ENCODE measurements at regions of chr4 and their contacts with region 1.

Region 1: GRCh38 chr4:184250795-184251669 is 33.4 kb upstream of the ENPP6 start:
- DNase-seq: peak; percentile 47
- H3K4me3 Mint-ChIP-seq: no peak overlapping the region
- H3K27ac Mint-ChIP-seq: no peak overlapping the region
- H3K4me1 Mint-ChIP-seq: peaks cover 20% of the 10 kb centered on the region
- H3K27me3 Mint-ChIP-seq: no peaks in the 10 kb centered on the region

Region 2: GRCh38 chr4:183840311-183840710 is 410.7 kb before region 1 on chr4:
- CTCF ChIA-PET with region 1: interaction called, 3 read pairs
- intact Hi-C with region 1: loop called (anchors 1 kb)
- DNase-seq: peak; percentile 81
- H3K4me3 Mint-ChIP-seq: no peak overlapping the region
- H3K27ac Mint-ChIP-seq: no peak overlapping the region
- H3K4me1 Mint-ChIP-seq: no peaks in the 10 kb centered on the region
- H3K27me3 Mint-ChIP-seq: peaks cover 12% of the 10 kb centered on the region

Region 3: DNA sequence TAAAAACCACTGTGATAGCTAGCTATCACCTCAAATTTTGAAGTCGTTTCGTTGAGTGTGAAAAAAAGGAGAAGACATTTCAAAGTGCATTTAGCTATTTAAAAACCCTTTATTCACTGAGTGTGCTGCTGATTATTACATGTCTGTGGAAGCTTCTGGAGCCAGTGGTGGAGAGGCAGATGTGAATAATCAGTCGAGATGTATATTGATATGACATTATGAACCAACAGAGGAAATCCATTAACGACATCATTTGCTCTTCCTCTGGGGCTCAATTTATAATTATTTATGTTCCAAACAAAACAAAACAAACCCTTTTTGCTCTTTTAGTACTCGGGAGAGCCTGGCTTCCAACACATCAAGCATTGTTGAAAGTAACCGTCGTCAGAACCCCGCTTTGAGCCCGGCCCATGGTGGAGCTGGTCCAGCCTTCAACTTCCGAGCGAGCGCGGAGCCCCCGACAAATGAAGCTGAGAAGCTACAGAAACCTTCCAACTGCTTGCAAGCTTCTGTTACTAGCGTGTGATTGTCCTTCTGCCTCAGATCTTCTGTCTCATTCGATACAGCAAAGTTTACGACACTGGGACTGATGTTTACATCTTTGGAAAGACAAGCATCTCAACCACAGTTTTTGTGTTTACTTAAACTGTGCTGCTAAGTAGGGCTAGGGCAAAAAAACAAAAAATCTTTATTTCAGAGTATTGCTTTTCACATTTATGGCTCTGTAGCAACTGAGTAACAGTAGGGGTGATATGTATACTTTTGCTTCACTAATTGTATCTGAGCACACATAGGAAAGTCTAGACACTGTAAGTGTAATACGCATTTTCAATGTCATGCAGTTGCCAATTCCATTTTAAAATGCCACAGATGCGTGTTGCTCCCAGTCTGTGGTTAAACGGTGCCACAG is 234.0 kb before region 1 on chr4:
- CTCF ChIA-PET with region 1: no interaction called
- intact Hi-C with region 1: no loop called
- DNase-seq: no peak
- H3K4me3 Mint-ChIP-seq: no peak overlapping the region
- H3K27ac Mint-ChIP-seq: no peak overlapping the region
- H3K4me1 Mint-ChIP-seq: peaks cover 4% of the 10 kb centered on the region
- H3K27me3 Mint-ChIP-seq: peaks cover 3% of the 10 kb centered on the region

Region 4: DNA sequence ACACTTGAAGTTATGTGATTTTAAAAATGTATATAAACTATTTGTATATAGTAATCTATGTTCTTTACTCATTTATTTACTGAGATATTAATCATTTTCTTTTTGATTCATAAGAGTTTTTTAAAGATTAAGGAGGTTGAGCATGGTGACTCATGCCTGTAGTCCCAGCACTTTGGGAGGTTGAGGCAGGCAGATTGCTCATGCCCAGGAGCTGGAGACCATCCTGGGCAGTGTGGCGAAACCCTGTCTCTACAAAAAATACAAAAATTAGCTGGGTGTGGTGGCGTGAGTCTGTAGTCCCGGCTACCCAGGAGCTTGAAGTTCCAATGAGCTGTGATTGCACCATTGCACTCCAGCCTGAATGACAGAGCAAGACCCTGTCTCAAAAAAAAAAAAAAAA is 176.0 kb before region 1 on chr4:
- CTCF ChIA-PET with region 1: no interaction called
- intact Hi-C with region 1: no loop called
- DNase-seq: no peak
- H3K4me3 Mint-ChIP-seq: no peak overlapping the region
- H3K27ac Mint-ChIP-seq: no peak overlapping the region
- H3K4me1 Mint-ChIP-seq: no peaks in the 10 kb centered on the region
- H3K27me3 Mint-ChIP-seq: peaks cover 19% of the 10 kb centered on the region

Region 5: DNA sequence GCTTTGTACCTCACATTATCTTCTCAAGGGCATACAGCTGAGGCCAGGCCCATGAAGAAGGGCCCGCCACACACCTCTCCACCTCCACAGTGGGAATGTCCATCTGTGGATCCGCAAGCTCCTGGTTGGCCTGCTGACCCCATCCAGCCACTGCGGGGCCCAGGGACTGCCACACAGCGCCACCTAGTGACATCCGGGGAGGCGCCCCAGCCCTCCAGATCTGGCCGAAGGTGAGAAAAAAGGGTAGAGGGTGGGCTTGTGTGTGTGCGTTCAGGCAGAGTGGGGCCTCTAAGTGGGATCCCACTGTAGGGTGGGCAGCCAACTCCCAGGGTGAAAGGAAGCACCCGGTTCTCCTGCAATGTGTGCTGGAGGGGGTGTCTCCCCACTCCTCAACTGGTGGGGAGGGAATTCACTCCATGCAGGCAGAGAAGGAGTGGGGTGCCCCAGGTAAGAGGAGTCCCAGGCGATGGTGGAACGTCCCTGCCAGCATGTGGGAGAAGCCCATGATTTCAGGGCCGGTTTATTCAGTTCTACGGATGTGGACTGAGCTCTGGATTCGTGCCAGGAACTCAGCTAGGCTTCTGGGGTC is 150.6 kb before region 1 on chr4:
- CTCF ChIA-PET with region 1: no interaction called
- intact Hi-C with region 1: loop called (anchors 5 kb)
- DNase-seq: peak; percentile 49
- H3K4me3 Mint-ChIP-seq: no peak overlapping the region
- H3K27ac Mint-ChIP-seq: no peak overlapping the region
- H3K4me1 Mint-ChIP-seq: no peaks in the 10 kb centered on the region
- H3K27me3 Mint-ChIP-seq: peaks cover 13% of the 10 kb centered on the region

Region 6: DNA sequence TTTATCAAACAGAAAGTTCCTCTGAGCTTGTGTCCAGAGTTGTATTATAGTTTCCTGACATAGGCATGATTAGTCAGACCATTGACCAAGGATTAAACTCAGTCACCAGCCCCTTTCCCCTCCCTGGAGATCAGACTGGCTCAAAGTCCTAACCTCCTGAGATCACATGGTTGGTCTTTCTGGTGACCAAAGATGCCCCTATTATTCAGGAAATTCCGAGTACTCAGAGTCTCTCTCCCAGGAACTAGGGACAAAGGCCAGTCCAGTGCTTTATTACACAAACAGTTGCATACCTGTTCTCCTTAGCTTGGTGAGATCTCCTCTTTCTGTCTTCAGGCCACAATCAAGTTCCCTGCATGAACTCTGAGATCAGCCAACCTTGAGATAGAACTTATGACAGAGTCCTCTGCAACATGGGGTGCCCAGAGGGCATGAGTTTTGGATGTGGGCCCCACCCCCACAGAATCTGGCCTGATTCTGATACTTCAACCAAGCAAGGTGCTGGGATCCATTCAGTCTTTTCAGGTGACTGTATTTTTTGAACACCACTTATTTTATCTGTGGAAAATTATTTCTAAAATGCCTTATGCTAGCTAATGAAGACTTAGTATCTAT is 18.7 kb before region 1 on chr4:
- CTCF ChIA-PET with region 1: interaction called, 21 read pairs
- intact Hi-C with region 1: loop called (anchors 1 kb)
- DNase-seq: no peak
- H3K4me3 Mint-ChIP-seq: no peak overlapping the region
- H3K27ac Mint-ChIP-seq: no peak overlapping the region
- H3K4me1 Mint-ChIP-seq: peaks cover 43% of the 10 kb centered on the region
- H3K27me3 Mint-ChIP-seq: no peaks in the 10 kb centered on the region

Region 7: DNA sequence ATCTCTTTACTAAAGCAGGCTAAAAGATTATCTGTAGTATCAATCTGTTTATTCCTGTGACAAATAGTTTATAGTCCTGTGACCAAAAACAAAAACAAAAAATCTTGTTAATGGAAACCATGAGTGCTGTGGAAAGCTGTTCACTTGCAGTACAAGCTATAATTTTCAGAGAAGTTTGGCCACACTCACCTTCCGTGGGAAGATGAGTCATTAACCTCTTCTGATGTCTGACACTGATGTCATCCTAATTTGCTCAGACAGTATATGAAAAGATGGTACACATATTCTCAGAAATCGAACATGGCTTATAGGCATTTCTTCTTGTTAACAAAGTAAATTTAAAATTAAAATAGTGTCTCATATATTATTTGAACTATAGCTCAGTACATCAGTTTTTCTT is 13.4 kb before region 1 on chr4:
- CTCF ChIA-PET with region 1: interaction called, 21 read pairs
- intact Hi-C with region 1: loop called (anchors 1 kb)
- DNase-seq: peak; percentile 84
- H3K4me3 Mint-ChIP-seq: peak overlapping the region; percentile 32
- H3K27ac Mint-ChIP-seq: peak overlapping the region; percentile 93
- H3K4me1 Mint-ChIP-seq: peaks cover 40% of the 10 kb centered on the region
- H3K27me3 Mint-ChIP-seq: no peaks in the 10 kb centered on the region